ENCODE measurements at regions of chr2 and their contacts with region 1.

Region 1: GRCh38 chr2:44361330-44362206 is at the starts of genes CAMKMT and PREPL:
- DNase-seq: peak; percentile 95 to 99 (median 99)
- ATAC-seq: peak; percentile 93
- H3K4me3 ChIP-seq: peak within 1 kb of the TSS; percentile 88
- H3K4me3 Mint-ChIP-seq: peak within 1 kb of the TSS; percentile 92 to 100 (median 98)
- H3K27ac ChIP-seq: peak within 1 kb of the TSS; percentile 99
- H3K27ac Mint-ChIP-seq: peak within 1 kb of the TSS; percentile 96 to 100 (median 99)
- H3K4me1 ChIP-seq: peaks cover 16 to 17% of the 10 kb centered on the region in 2 donors
- H3K4me1 Mint-ChIP-seq: peaks cover 22 to 81% (median 61%) of the 10 kb centered on the region in 7 donors
- H3K27me3 ChIP-seq: no peaks in the 10 kb centered on the region
- H3K27me3 Mint-ChIP-seq: peaks cover 0 to 3% (median 0%) of the 10 kb centered on the region in 5 donors
- total RNA-seq, gene CAMKMT: 11.1 to 20.8 (median 18.7) TPM
- total RNA-seq, gene PREPL: 22.0 to 41.9 (median 28.5) TPM

Region 2: GRCh38 chr2:43773876-43774613 is 587.5 kb before region 1 on chr2 and contains the start of gene DYNC2LI1:
- CTCF ChIA-PET with region 1: no interaction called
- POLR2A ChIA-PET with region 1: no interaction called
- intact Hi-C with region 1: loop called (anchors 5 kb)
- DNase-seq: peak; percentile 44 to 81 (median 65)
- ATAC-seq: peak; percentile 97
- H3K4me3 ChIP-seq: peak within 1 kb of the TSS; percentile 75
- H3K4me3 Mint-ChIP-seq: peak within 1 kb of the TSS; percentile 92 to 99 (median 96)
- H3K27ac ChIP-seq: peak within 1 kb of the TSS; percentile 67
- H3K27ac Mint-ChIP-seq: peak within 1 kb of the TSS; percentile 35 to 93 (median 79)
- H3K4me1 ChIP-seq: no peaks in the 10 kb centered on the region
- H3K4me1 Mint-ChIP-seq: peaks cover 10 to 21% (median 13%) of the 10 kb centered on the region in 7 donors
- H3K27me3 ChIP-seq: no peaks in the 10 kb centered on the region
- H3K27me3 Mint-ChIP-seq: peaks cover 0 to 4% (median 0%) of the 10 kb centered on the region in 5 donors
- total RNA-seq, gene DYNC2LI1: 1.9 to 6.1 (median 5.1) TPM

Region 3: DNA sequence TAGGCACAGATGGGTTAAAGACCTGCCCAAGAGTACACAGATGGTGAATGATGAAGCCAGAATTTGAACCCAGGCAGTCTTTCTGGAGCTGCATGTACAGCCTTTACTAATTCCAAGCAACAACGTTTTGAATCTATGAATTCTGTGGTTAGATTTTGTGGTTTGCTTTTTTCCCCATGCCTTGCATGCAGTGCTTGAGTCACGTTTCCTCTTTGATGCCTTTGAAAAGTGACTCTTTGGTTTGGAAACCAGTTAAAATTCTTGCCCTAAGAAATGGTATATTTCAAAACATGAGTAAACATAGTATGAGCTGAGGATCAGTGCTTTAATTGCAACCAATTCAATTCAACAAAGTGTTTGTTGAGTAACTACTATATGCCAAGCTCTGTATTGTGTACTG is 241.1 kb before region 1 on chr2:
- CTCF ChIA-PET with region 1: no interaction called
- POLR2A ChIA-PET with region 1: interaction called, 5 read pairs
- intact Hi-C with region 1: loop called in 1 of 2 experiments (anchors 1 kb)
- DNase-seq: peak in 8 of 9 donors; percentile 27 to 82 (median 54)
- ATAC-seq: peak; percentile 84
- H3K4me3 ChIP-seq: no peak overlapping the region
- H3K4me3 Mint-ChIP-seq: peak overlapping the region in 6 of 10 donors; percentile 16 to 71 (median 50)
- H3K27ac ChIP-seq: no peak overlapping the region
- H3K27ac Mint-ChIP-seq: peak overlapping the region in 2 of 9 donors; percentile 20 to 46
- H3K4me1 ChIP-seq: peaks cover 5 to 7% of the 10 kb centered on the region in 2 donors
- H3K4me1 Mint-ChIP-seq: peaks cover 8 to 39% (median 20%) of the 10 kb centered on the region in 7 donors
- H3K27me3 ChIP-seq: no peaks in the 10 kb centered on the region
- H3K27me3 Mint-ChIP-seq: peaks cover 0 to 6% (median 0%) of the 10 kb centered on the region in 5 donors

Region 4: GRCh38 chr2:44136186-44136585 is 225.4 kb before region 1 on chr2:
- CTCF ChIA-PET with region 1: no interaction called
- POLR2A ChIA-PET with region 1: no interaction called
- intact Hi-C with region 1: no loop called
- DNase-seq: no peak
- ATAC-seq: no peak
- H3K4me3 ChIP-seq: no peak overlapping the region
- H3K4me3 Mint-ChIP-seq: no peak overlapping the region
- H3K27ac ChIP-seq: no peak overlapping the region
- H3K27ac Mint-ChIP-seq: no peak overlapping the region
- H3K4me1 ChIP-seq: no peaks in the 10 kb centered on the region
- H3K4me1 Mint-ChIP-seq: peaks cover 2 to 25% (median 11%) of the 10 kb centered on the region in 7 donors
- H3K27me3 ChIP-seq: no peaks in the 10 kb centered on the region
- H3K27me3 Mint-ChIP-seq: peaks cover 0 to 15% (median 0%) of the 10 kb centered on the region in 5 donors

Region 5: GRCh38 chr2:44392338-44392943 is 30.9 kb after region 1 on chr2:
- CTCF ChIA-PET with region 1: interaction called, 4 read pairs
- POLR2A ChIA-PET with region 1: interaction called, 3 read pairs
- intact Hi-C with region 1: loop called (anchors 1 to 2 kb)
- DNase-seq: peak in 7 of 9 donors; percentile 10 to 34 (median 23)
- ATAC-seq: no peak
- H3K4me3 ChIP-seq: no peak overlapping the region
- H3K4me3 Mint-ChIP-seq: no peak overlapping the region
- H3K27ac ChIP-seq: no peak overlapping the region
- H3K27ac Mint-ChIP-seq: no peak overlapping the region
- H3K4me1 ChIP-seq: no peaks in the 10 kb centered on the region
- H3K4me1 Mint-ChIP-seq: peaks cover 0 to 19% (median 10%) of the 10 kb centered on the region in 7 donors
- H3K27me3 ChIP-seq: no peaks in the 10 kb centered on the region
- H3K27me3 Mint-ChIP-seq: no peaks in the 10 kb centered on the region

Region 6: DNA sequence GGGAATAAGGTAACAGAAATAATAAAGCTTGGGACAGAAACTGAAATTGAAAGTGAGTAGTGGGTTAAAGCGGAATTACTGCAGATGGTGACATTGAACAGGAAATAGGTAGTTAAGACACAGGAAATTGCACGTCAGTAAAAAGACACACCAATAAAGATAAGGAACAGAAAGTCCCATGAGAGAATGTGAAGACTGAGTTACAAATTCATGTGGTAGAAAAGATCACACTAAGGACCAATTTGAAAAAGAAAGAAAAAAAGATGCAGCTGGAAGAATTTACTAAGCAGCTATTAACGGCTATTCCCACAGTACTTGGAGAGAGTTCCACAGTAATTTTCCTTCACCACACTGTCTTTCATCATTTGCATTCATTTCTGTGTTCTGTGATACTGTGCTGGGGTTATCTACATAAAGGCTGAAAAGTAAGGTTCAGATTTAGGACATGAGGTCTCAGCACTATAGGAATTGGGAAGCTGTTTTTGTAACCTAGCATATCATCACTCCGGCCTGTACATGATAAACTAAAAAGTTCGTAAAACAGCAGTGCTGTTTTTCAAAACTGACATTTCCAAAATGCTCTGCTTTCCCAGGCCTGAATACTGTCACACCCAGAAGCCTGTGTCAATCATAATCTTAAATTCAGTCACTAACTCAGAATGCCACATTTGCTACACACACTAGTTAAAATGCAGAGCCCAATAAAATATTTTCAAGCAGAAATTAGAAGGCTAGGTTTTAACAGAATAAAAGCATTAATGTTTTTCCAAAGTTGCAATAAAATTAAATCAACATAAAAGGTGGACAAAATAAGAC is 1206.6 kb after region 1 on chr2:
- CTCF ChIA-PET with region 1: no interaction called
- POLR2A ChIA-PET with region 1: no interaction called
- intact Hi-C with region 1: loop called (anchors 5 kb)
- DNase-seq: peak in 7 of 9 donors; percentile 65 to 83 (median 80)
- ATAC-seq: peak; percentile 98
- H3K4me3 ChIP-seq: peak overlapping the region; percentile 54
- H3K4me3 Mint-ChIP-seq: peak overlapping the region; percentile 73 to 96 (median 88)
- H3K27ac ChIP-seq: peak overlapping the region; percentile 76
- H3K27ac Mint-ChIP-seq: peak overlapping the region; percentile 90 to 98 (median 94)
- H3K4me1 ChIP-seq: peaks cover 12 to 14% of the 10 kb centered on the region in 2 donors
- H3K4me1 Mint-ChIP-seq: peaks cover 15 to 49% (median 39%) of the 10 kb centered on the region in 7 donors
- H3K27me3 ChIP-seq: no peaks in the 10 kb centered on the region
- H3K27me3 Mint-ChIP-seq: no peaks in the 10 kb centered on the region